Calu3 (cell line): ENCODE measurements at regions of chr2 and their contacts with region 1.

Region 1: GRCh38 chr2:43219383-43220228 is 6.8 kb downstream of the ZFP36L2 start:
- DNase-seq: peak; percentile 91
- H3K4me3 Mint-ChIP-seq: peak overlapping the region; percentile 98
- H3K27ac Mint-ChIP-seq: peak overlapping the region; percentile 84
- H3K4me1 Mint-ChIP-seq: peaks cover 35% of the 10 kb centered on the region
- H3K27me3 Mint-ChIP-seq: no peaks in the 10 kb centered on the region
- CTCF ChIP-seq: no peak

Region 2: GRCh38 chr2:42901076-42901640 is 318.4 kb before region 1 on chr2:
- CTCF ChIA-PET with region 1: no interaction called
- intact Hi-C with region 1: no loop called
- DNase-seq: no peak
- H3K4me3 Mint-ChIP-seq: no peak overlapping the region
- H3K27ac Mint-ChIP-seq: no peak overlapping the region
- H3K4me1 Mint-ChIP-seq: peaks cover 11% of the 10 kb centered on the region
- H3K27me3 Mint-ChIP-seq: no peaks in the 10 kb centered on the region
- CTCF ChIP-seq: no peak

Region 3: GRCh38 chr2:43169987-43170386 is 49.6 kb before region 1 on chr2:
- CTCF ChIA-PET with region 1: interaction called, 10 read pairs
- intact Hi-C with region 1: loop called (anchors 5 kb)
- DNase-seq: peak; percentile 73
- H3K4me3 Mint-ChIP-seq: peak overlapping the region; percentile 63
- H3K27ac Mint-ChIP-seq: peak overlapping the region; percentile 91
- H3K4me1 Mint-ChIP-seq: peaks cover 54% of the 10 kb centered on the region
- H3K27me3 Mint-ChIP-seq: no peaks in the 10 kb centered on the region
- CTCF ChIP-seq: peak; percentile 77

Region 4: DNA sequence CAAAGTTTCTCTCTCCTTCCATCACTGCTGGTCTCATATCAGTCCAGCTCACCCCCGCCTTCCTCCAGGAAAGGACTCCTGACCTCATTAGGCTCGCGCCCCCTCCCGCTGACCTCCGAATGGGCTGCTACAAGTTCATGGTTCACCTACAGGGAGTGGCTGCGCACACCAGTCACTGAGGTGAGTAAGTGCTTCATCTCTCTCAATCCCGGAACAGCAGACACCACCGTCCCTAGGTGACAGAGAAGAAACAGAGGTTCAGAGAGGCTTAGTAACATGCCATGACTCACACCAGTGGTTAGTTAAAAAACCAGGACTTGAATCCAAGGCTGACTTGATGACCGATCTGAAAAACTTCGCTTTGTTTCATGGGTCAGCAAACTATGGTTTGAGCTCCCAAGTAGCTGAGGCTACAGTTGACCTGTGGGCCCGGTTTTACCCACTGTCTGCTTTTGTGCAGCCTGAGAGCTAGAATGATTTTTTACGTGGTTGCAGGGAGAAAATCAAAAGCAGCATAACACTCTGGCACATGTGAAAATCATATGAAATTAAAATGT is 35.2 kb before region 1 on chr2:
- CTCF ChIA-PET with region 1: interaction called, 5 read pairs
- intact Hi-C with region 1: loop called (anchors 5 kb)
- DNase-seq: peak; percentile 69
- H3K4me3 Mint-ChIP-seq: peak overlapping the region; percentile 13
- H3K27ac Mint-ChIP-seq: peak overlapping the region; percentile 84
- H3K4me1 Mint-ChIP-seq: peaks cover 47% of the 10 kb centered on the region
- H3K27me3 Mint-ChIP-seq: no peaks in the 10 kb centered on the region
- CTCF ChIP-seq: no peak

Region 5: DNA sequence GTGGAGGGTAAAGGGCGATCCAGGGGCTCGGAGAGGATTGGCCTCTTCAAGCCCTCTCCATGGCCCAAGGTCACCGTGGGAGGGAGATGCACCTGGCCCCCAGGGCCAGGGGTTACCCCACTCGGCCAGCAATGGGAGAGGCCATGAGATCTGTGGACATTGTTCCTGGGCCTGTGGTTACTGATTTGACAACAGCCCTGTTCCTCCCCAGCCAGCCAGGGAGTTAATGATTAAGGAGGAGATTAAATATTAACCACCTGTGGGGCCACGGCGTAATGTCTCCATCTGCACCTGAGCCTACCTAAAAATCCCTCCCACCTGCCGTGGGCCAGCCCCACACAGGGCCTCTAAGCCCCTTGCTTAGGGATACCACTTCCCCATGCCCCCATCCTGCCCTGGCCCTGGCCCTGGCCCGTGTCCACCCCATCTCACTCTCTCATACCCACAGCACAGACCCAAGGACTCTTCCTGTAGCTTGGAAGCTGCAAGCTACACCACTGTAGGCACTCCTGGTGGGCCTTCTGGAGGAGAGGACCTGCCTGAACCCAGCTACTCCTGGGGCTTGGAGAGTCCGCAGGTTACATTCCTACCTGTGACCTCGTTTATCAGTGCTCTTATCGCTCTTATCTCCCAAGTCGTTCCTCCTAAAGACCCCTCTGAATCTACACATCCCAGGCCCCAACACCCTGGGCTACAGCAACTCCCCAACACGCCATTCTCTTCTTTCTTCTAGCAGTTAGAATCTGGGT is 25.3 kb before region 1 on chr2:
- CTCF ChIA-PET with region 1: interaction called, 7 read pairs
- intact Hi-C with region 1: loop called (anchors 1 kb)
- DNase-seq: peak; percentile 86
- H3K4me3 Mint-ChIP-seq: peak overlapping the region; percentile 55
- H3K27ac Mint-ChIP-seq: peak overlapping the region; percentile 88
- H3K4me1 Mint-ChIP-seq: peaks cover 54% of the 10 kb centered on the region
- H3K27me3 Mint-ChIP-seq: no peaks in the 10 kb centered on the region
- CTCF ChIP-seq: no peak